Left ventricle myocardium superior (tissue), 1 donor: ENCODE measurements at regions of chr3 and their contacts with region 1.

Region 1: DNA sequence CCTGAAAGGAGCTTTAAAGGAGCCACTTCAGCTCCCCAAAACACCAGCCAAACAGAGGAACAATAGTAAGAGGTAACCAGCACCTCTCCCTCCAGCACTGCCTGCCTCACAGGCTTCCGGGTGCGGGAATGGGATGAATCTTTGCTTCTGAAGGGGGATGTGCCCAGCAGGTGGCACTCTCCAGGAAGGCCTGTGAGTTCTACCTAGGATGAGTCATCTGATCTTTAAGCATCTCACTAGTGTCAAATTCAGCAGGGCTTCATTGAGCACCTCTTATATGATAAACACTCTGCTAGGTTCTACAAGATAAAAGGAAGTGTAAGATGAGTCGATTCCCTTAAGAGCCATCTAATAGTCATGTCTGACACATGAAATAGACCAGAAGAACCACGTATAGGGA is 237.4 kb upstream of the UMPS start:
- DNase-seq: peak; percentile 59
- ATAC-seq: peak; percentile 70

Region 2: DNA sequence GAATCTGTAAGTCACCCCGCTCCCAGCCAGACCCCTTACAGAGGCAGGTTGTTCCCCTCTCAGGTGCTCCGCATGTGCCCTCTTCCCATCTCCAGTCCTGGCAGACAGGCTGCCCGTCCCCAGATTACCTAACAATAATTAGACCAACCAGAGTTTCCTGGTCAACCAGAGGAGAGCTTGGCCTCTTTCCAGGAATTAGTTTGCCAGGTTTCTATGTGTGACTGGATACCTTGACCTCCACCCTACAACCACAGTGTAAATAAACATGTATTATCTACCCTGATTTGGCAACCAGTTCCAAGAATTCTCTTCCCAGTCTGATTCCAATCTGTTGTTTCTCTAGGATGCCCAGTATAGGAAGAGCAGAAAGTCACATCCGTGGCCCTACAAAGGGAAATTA is 59.4 kb after region 1 on chr3:
- intact Hi-C with region 1: loop called (anchors 5 kb)
- DNase-seq: no peak
- ATAC-seq: peak; percentile 67